Psoas muscle (tissue), 8 donors: ENCODE measurements at regions of chr13 and their contacts with region 1.

Region 1: GRCh38 chr13:112873851-112874750 is 94.9 kb upstream of the MCF2L start:
- DNase-seq: peak; percentile 83 to 88
- ATAC-seq: peak; percentile 87 to 97 (median 92)
- H3K4me3 ChIP-seq: no peak overlapping the region
- H3K27ac ChIP-seq: peak overlapping the region; percentile 23
- H3K4me1 ChIP-seq: no peaks in the 10 kb centered on the region
- H3K27me3 ChIP-seq: no peaks in the 10 kb centered on the region
- CTCF ChIP-seq: peak; percentile 97

Region 2: GRCh38 chr13:111474136-111475002 is 1399.7 kb before region 1 on chr13:
- intact Hi-C with region 1: loop called in 1 of 2 experiments (anchors 10 kb)
- DNase-seq: no peak
- ATAC-seq: peak; percentile 43 to 63 (median 54)
- H3K4me3 ChIP-seq: no peak overlapping the region
- H3K27ac ChIP-seq: no peak overlapping the region
- H3K4me1 ChIP-seq: no peaks in the 10 kb centered on the region
- H3K27me3 ChIP-seq: peaks cover 0 to 18% (median 2%) of the 10 kb centered on the region in 3 donors
- CTCF ChIP-seq: peak; percentile 55

Region 3: GRCh38 chr13:112638157-112638750 is 235.8 kb before region 1 on chr13:
- intact Hi-C with region 1: loop called (anchors 1 to 5 kb)
- DNase-seq: no peak
- ATAC-seq: no peak
- H3K4me3 ChIP-seq: no peak overlapping the region
- H3K27ac ChIP-seq: no peak overlapping the region
- H3K4me1 ChIP-seq: no peaks in the 10 kb centered on the region
- H3K27me3 ChIP-seq: peaks cover 0 to 55% (median 6%) of the 10 kb centered on the region in 3 donors
- CTCF ChIP-seq: no peak

Region 4: DNA sequence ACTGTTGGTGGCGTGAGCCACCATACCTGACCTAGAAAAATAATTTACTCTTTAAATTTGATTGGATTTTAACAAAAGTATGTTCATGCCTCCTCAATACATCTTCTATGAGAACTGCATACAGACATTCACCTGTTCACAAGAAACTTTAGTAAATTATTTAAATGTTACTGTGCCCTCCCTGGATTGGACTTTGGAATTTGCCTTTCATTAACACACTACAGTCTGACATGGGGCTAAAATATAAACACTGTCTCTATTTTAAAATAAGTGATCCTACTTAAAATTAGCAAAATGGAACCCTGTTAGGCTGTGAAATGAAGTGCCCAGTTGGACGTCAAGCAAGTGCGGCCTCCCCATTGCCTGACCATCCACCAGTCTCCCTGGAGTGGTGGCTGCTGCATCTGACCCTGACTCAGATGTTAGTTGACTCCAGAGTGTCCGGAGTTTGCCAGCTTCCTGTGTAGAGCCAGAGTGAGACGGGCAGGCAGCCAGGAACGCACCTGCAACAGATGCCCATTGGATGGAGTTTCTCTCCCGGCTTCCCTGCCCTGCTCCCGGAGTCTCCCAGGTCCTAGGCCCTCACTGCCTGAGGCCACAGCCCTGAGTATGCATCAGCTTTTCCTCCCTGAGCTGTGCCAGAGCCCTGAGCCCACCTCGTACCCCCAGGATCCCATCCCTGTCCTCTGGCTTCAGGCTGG is 230.2 kb before region 1 on chr13:
- intact Hi-C with region 1: loop called (anchors 1 to 5 kb)
- DNase-seq: no peak
- ATAC-seq: no peak
- H3K4me3 ChIP-seq: no peak overlapping the region
- H3K27ac ChIP-seq: no peak overlapping the region
- H3K4me1 ChIP-seq: no peaks in the 10 kb centered on the region
- H3K27me3 ChIP-seq: peaks cover 0 to 12% (median under 1%) of the 10 kb centered on the region in 3 donors
- CTCF ChIP-seq: no peak